H1 (cell line): ENCODE measurements at regions of chr7 and their contacts with region 1.

Region 1: DNA sequence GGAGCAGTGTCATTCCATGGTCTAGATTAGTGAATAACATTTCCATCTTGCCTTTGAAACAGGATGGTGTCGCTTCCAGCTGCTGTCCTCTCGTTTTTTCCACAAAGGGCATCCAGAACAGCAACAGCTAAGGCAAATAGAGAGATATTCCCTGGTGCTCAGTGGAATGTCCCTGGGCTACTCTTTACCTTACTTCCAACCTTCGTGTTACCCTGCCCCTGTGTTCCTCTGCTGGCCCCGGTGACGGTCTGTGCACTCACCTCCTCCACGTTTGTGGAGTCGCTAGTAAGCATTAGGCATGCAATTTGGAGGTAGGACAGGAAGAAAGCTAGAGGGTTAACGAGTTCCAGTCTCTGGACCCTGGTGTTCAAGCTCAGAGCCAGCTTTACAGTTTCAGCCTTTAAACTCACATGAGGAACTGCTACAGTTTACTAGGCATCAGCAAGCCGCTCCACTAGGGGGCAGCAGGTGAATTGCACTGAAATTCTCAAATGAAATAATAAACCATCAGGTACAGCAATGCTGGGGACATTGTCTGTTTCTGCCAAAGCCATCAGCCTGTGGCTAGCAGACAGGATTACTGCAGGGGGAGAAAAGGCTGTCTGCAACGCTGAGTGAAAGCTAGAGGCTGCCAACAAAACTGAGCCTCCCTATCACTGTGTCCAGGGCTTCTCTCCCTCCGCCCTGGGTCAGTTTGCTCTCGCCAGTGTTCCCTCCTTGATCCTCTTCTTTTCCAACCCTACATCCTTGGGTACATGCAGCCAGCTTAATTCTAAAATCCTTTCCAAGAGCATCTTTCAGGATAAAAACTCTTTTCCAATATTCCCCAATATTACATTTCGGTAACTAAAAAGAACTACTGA is 9.0 kb downstream of the MRPL32 start:
- DNase-seq: peak; percentile 65 to 92
- H3K4me3 ChIP-seq: no peak overlapping the region
- H3K27ac ChIP-seq: no peak overlapping the region
- H3K4me1 ChIP-seq: no peaks in the 10 kb centered on the region; a peak in 1 of 7 replicates
- H3K27me3 ChIP-seq: no peaks in the 10 kb centered on the region
- CTCF ChIP-seq: peak; percentile 2 to 91 (median 82)
- EP300 ChIP-seq: no peak
- POLR2A ChIP-seq: 0 out of 3 replicates have a peak, but pooled peaks of 1 of the 2 experiments have one; percentile 25
- RAD21 ChIP-seq: peak; percentile 96

Region 2: DNA sequence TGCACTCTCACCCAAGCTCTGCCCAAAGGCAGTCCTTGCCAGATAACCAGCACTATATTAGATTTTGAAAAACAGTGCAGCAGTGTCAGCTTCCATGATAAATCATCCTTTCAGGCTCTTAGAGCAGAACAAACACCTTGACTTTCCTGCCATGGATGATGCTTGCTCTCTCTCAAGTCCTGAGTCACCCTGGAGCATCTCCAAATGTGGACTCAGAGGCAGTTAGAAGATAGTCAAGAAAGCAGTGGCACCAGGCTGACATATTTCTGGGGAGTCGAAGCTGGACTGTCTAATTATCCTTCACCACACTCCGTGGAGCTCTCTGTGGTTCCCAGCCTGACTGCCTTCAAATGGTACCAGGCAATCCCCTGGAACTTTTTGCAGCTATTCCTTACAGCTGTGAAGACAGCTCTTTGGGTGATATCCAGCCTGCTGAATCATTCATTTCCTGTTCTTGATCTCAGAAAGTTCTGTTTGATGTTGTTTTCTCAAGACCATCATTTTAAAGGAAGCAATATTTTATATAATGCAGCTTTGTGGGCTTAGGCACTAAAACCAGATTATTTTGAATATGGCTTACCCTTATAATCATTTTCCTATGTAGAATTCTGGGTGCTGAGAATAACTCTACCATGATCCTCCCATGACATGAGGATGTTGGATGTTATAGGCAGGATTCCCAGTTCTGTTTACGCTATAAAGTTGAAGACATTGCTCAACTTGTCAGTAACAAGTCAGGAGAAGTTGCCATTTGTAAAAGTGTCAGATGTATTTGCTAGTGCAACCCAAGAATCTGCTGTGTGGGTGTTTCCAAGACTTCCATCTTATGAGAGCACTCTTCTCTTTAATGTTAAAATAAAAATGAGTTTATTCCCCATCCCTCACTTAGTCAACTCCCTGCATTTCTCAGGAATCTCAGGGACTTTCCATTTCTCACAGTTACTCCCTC is 263.2 kb before region 1 on chr7:
- CTCF ChIA-PET with region 1: no interaction called
- POLR2A ChIA-PET with region 1: no interaction called
- DNase-seq: no peak
- H3K4me3 ChIP-seq: no peak overlapping the region
- H3K27ac ChIP-seq: no peak overlapping the region
- H3K4me1 ChIP-seq: no peaks in the 10 kb centered on the region
- H3K27me3 ChIP-seq: no peaks in the 10 kb centered on the region
- CTCF ChIP-seq: no peak
- EP300 ChIP-seq: no peak
- POLR2A ChIP-seq: no peak
- RAD21 ChIP-seq: no peak

Region 3: DNA sequence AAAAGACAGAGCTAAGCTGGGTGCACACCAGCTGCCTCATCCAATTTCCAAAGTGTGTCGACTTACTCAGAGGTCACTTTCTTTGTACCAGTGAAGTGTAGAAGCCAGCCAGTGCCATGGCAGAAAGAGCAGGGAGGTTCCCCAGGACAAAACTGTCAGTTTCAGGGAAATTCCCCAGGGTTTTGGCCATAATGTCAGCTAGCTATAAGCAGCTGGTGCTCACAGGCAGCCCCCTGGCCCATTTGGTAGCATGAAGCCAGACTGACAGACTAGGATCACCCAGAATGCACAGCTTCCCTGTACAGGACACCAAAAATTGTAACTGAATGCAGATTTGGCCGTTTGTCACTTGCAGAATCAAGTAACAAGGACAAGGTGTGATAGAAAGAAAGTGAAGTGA is 19.5 kb after region 1 on chr7:
- CTCF ChIA-PET with region 1: interaction called, 11 read pairs
- POLR2A ChIA-PET with region 1: interaction called, 3 read pairs
- DNase-seq: no peak
- H3K4me3 ChIP-seq: no peak overlapping the region
- H3K27ac ChIP-seq: no peak overlapping the region
- H3K4me1 ChIP-seq: peaks cover 0 to 3% (median under 1%) of the 10 kb centered on the region in 4 experiments; a peak in 1 of 7 replicates
- H3K27me3 ChIP-seq: no peaks in the 10 kb centered on the region
- CTCF ChIP-seq: no peak
- EP300 ChIP-seq: no peak
- POLR2A ChIP-seq: no peak
- RAD21 ChIP-seq: no peak

Region 4: DNA sequence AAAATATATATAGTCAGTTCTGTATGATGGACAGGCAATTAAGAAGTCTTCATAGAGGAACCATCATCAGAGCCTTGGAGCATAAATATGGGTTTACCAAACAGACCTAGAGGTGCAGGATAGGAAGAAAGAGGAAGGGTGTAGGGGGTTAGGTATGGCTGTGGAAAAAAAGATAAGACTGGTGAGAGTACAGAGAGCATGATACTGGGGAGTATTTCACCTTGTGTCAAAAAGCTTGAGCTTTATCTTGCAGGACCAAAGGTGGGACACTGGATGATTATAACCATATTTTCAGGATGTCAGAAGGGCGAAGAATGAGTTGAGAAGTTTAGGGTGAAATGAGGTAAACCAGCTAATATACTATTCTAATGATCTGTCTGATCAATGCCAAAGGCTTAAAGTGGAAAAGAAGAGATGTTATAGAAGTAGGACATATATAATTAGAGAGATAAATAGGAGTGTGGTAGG is 45.6 kb after region 1 on chr7:
- CTCF ChIA-PET with region 1: interaction called, 10 read pairs
- POLR2A ChIA-PET with region 1: no interaction called
- DNase-seq: no peak
- H3K4me3 ChIP-seq: no peak overlapping the region
- H3K27ac ChIP-seq: no peak overlapping the region
- H3K4me1 ChIP-seq: 0 out of 7 replicates have a peak, but pooled peaks cover 0 to under 1% (median 0%) of the 10 kb centered on the region in 4 experiments
- H3K27me3 ChIP-seq: no peaks in the 10 kb centered on the region
- CTCF ChIP-seq: no peak
- EP300 ChIP-seq: no peak
- POLR2A ChIP-seq: no peak
- RAD21 ChIP-seq: no peak

Region 5: GRCh38 chr7:43377196-43377960 is 436.2 kb after region 1 on chr7:
- CTCF ChIA-PET with region 1: no interaction called
- POLR2A ChIA-PET with region 1: no interaction called
- DNase-seq: no peak
- H3K4me3 ChIP-seq: no peak overlapping the region
- H3K27ac ChIP-seq: no peak overlapping the region
- H3K4me1 ChIP-seq: peaks cover 0 to 3% (median 1%) of the 10 kb centered on the region in 4 experiments; a peak in 2 of 7 replicates
- H3K27me3 ChIP-seq: no peaks in the 10 kb centered on the region
- CTCF ChIP-seq: no peak
- EP300 ChIP-seq: no peak
- POLR2A ChIP-seq: no peak
- RAD21 ChIP-seq: no peak